Dorsolateral prefrontal cortex (tissue), 120 donors: ENCODE measurements at regions of chrX and their contacts with region 1.

Region 1: DNA sequence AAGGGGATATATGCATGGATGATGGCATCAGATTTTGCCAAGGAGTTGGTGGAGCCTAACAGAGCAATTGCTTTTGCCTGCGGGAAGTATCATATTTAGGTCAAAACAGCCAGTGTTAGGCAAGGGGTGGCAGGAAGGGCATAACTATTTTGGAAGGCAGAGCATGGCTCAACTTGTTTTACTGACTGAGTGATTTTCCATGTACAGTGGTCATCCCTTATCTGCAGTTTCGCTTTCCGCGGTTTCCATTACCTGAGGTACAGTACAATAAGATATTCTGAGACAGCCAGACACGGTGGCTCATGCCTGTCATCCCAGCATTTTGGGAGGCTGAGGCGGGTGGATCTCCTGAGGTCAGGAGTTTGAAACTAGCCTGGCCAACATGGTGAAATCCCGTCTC is 36.4 kb upstream of the CD40LG start:
- DNase-seq: no peak
- H3K4me3 ChIP-seq: no peak overlapping the region
- H3K27ac ChIP-seq: no peak overlapping the region
- H3K27me3 ChIP-seq: peaks cover 0 to 74% (median 14%) of the 10 kb centered on the region in 45 donors
- CTCF ChIP-seq: no peak

Region 2: DNA sequence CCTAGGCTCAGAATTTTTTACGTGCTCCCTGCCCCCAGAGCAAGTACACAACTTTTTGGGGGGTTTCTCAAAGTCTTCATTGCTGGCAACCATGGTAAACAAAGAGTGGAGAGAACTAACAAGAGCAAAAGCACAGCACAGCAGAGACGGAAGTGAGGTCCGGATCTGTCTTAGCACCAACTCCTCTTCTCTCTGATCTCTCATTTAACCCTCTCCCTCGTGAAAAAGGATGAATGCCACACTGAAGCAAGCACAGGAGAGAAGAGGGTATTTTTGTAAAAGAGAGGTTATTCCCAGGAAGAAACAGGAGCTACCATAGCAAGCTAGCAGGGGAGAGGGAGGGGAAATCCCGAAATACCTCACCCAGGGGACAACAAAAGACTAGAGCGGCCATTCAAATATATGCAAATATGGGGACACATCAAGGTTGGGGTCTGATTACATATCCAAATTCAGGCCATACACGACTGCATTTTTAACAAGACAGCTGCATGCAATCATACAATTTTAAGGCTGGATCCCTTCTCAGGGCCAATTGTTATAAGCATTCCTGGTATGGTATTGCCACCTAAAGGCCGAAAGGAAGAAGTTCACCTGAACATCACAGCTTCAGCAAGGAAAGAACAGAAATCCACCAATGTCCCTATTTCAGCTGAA is 83.0 kb after region 1 on chrX:
- intact Hi-C with region 1: loop called in 1 of 2 experiments (anchors 5 kb)
- DNase-seq: no peak
- H3K4me3 ChIP-seq: peak overlapping the region in 3 of 59 donors; percentile 3 to 26 (median 7)
- H3K27ac ChIP-seq: no peak overlapping the region
- H3K27me3 ChIP-seq: peaks cover 0 to 66% (median 20%) of the 10 kb centered on the region in 45 donors
- CTCF ChIP-seq: peak in 55 of 56 donors; percentile 31 to 82 (median 66)